ENCODE measurements at regions of chr11 and their contacts with region 1.

Region 1: GRCh38 chr11:65606876-65607613 is 7.0 kb downstream of the MAP3K11 start:
- DNase-seq: no peak
- H3K4me3 Mint-ChIP-seq: no peak overlapping the region
- H3K27ac Mint-ChIP-seq: peak overlapping the region; percentile 34
- H3K4me1 Mint-ChIP-seq: peaks cover 29% of the 10 kb centered on the region
- H3K27me3 Mint-ChIP-seq: no peaks in the 10 kb centered on the region

Region 2: DNA sequence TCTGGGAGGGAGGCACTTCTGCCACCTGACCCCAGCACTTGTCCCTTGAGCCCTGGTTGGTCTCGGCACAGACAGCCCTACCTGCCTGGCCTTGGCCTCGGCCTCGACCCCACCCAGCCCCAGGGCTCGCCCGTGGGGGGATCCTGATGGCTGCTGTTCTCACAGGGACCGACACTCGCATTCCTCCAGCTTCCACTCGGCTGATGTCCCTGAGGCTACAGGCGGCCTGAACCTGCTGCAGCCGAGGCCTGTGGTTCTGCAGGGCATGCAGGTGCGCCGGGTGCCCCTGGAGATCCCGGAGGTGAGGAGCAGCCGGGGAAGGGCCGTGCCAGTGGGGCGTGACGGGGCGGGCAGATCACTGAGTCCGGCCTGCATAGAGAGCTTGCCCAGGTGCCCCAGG is 13.6 kb after region 1 on chr11:
- intact Hi-C with region 1: loop called (anchors 1 kb)
- DNase-seq: no peak
- H3K4me3 Mint-ChIP-seq: no peak overlapping the region
- H3K27ac Mint-ChIP-seq: no peak overlapping the region
- H3K4me1 Mint-ChIP-seq: peaks cover 9% of the 10 kb centered on the region
- H3K27me3 Mint-ChIP-seq: no peaks in the 10 kb centered on the region